WTC11 (cell line): ENCODE measurements at regions of chr19 and their contacts with region 1.

Region 1: GRCh38 chr19:51296336-51297093 is 14.9 kb upstream of the IGLON5 start:
- DNase-seq: peak; percentile 42
- ATAC-seq: peak; percentile 61
- H3K4me3 Mint-ChIP-seq: no peak overlapping the region
- H3K27ac Mint-ChIP-seq: no peak overlapping the region
- H3K4me1 Mint-ChIP-seq: peaks cover 57% of the 10 kb centered on the region
- H3K27me3 Mint-ChIP-seq: peaks cover 5% of the 10 kb centered on the region; the same call in 1 of the 2 replicates
- CTCF ChIP-seq: no peak

Region 2: GRCh38 chr19:51219307-51219706 is 77.2 kb before region 1 on chr19:
- CTCF ChIA-PET with region 1: no interaction called
- POLR2A ChIA-PET with region 1: no interaction called
- DNase-seq: no peak
- ATAC-seq: no peak
- H3K4me3 Mint-ChIP-seq: no peak overlapping the region
- H3K27ac Mint-ChIP-seq: no peak overlapping the region
- H3K4me1 Mint-ChIP-seq: no peaks in the 10 kb centered on the region
- H3K27me3 Mint-ChIP-seq: peaks cover 39% of the 10 kb centered on the region
- CTCF ChIP-seq: no peak

Region 3: DNA sequence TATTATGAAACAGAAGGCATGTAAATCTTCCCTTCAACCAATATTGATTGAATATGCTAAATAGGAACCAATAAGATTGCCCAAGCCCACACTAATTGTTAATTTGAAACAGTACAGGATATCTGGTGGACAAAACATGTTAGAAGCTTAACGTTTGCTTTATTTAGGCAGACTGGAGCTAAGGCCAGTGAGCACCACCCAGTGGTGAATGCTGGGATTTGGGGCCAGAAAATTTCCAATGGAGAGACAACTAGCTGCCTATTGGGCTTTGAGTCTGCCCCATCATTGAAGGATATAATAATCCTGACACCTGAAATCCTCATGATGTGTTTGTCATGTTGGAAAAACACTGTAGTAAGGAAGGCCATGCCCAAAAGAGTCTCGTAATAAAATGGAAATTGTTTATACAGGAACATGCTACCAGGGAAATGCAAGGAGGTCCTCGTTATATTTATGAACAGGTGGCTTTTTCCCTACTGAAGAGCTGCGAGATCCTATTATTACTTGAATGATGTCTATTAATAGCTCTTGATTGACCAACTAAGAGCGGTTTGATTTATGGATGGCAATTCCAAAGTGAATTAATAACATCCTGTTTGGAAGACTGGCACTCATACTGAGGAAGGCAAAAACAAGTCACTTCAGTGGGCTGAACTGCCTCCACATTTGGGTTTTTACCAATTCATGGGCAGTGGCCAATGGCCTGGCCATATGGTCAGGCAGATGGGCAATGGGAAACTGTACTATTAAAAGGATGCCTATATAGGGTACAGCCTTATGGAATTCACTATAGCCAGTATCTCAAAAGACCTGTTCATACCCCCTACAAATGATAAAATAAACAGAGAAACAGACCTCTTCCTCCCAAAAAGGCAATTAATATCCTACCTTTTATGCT is 36.9 kb before region 1 on chr19:
- CTCF ChIA-PET with region 1: interaction called, 10 read pairs
- POLR2A ChIA-PET with region 1: no interaction called
- DNase-seq: peak; percentile 66
- ATAC-seq: peak; percentile 65
- H3K4me3 Mint-ChIP-seq: no peak overlapping the region
- H3K27ac Mint-ChIP-seq: no peak overlapping the region
- H3K4me1 Mint-ChIP-seq: peaks cover 14% of the 10 kb centered on the region
- H3K27me3 Mint-ChIP-seq: peaks cover 3% of the 10 kb centered on the region; the same call in 1 of the 2 replicates
- CTCF ChIP-seq: peak; percentile 52

Region 4: GRCh38 chr19:51327066-51328001 is 30.8 kb after region 1 on chr19:
- CTCF ChIA-PET with region 1: interaction called, 12 read pairs
- POLR2A ChIA-PET with region 1: no interaction called
- DNase-seq: peak; percentile 79
- ATAC-seq: peak; percentile 83
- H3K4me3 Mint-ChIP-seq: peak overlapping the region; percentile 70
- H3K27ac Mint-ChIP-seq: peak overlapping the region; percentile 94; the same call in 1 of the 2 replicates
- H3K4me1 Mint-ChIP-seq: peaks cover 8% of the 10 kb centered on the region
- H3K27me3 Mint-ChIP-seq: peaks cover 26% of the 10 kb centered on the region
- CTCF ChIP-seq: no peak

Region 5: DNA sequence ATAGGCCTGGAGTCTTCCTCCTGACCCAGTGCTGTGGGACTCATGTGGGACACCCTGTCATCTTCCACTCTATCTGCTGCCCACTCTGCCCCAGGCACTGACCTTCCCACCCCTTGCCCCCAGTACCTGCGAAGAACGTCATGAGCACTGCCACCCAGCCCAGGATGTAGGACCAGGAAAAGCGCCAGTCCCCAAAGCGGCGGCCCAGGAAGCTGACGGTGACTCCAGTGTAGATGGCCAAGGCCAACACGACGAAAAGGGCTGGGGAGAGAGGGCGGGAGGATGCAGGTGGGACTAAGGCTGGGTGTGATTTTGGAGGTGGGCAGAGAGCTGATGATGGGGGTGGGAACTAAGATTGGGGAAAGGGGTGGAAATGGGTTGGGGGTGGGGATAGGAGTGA is 83.9 kb after region 1 on chr19:
- CTCF ChIA-PET with region 1: no interaction called
- POLR2A ChIA-PET with region 1: no interaction called
- DNase-seq: no peak
- ATAC-seq: no peak
- H3K4me3 Mint-ChIP-seq: no peak overlapping the region
- H3K27ac Mint-ChIP-seq: no peak overlapping the region
- H3K4me1 Mint-ChIP-seq: peaks cover under 1% of the 10 kb centered on the region
- H3K27me3 Mint-ChIP-seq: peaks cover 12% of the 10 kb centered on the region
- CTCF ChIP-seq: no peak

Region 6: DNA sequence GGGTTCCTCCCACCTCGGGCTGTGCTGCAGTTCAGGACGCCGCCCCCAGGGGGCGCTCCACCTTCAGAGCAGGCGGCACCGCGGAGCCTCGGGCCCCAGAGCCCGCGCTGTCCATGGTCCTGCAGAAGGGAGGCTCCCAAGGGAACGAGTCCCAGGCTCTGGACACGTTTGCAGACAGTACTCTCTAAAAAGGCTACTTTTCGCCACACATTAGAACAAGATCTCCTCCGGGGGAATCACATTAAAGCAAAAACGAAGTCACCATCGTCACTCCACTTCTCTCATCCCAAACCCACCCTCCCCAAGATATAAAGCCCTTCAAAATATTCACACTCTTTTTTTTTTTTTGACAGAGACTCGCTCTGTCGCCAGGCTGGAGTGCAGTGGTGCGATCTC is 125.5 kb after region 1 on chr19:
- CTCF ChIA-PET with region 1: interaction called, 16 read pairs
- POLR2A ChIA-PET with region 1: no interaction called
- DNase-seq: peak; percentile 97
- ATAC-seq: peak; percentile 86
- H3K4me3 Mint-ChIP-seq: peak overlapping the region; percentile 59
- H3K27ac Mint-ChIP-seq: no peak overlapping the region
- H3K4me1 Mint-ChIP-seq: peaks cover 5% of the 10 kb centered on the region; the same call in 1 of the 2 replicates
- H3K27me3 Mint-ChIP-seq: peaks cover 55% of the 10 kb centered on the region
- CTCF ChIP-seq: peak; percentile 100